PC-9 (cell line): ENCODE measurements at regions of chr12 and their contacts with region 1.

Region 1: DNA sequence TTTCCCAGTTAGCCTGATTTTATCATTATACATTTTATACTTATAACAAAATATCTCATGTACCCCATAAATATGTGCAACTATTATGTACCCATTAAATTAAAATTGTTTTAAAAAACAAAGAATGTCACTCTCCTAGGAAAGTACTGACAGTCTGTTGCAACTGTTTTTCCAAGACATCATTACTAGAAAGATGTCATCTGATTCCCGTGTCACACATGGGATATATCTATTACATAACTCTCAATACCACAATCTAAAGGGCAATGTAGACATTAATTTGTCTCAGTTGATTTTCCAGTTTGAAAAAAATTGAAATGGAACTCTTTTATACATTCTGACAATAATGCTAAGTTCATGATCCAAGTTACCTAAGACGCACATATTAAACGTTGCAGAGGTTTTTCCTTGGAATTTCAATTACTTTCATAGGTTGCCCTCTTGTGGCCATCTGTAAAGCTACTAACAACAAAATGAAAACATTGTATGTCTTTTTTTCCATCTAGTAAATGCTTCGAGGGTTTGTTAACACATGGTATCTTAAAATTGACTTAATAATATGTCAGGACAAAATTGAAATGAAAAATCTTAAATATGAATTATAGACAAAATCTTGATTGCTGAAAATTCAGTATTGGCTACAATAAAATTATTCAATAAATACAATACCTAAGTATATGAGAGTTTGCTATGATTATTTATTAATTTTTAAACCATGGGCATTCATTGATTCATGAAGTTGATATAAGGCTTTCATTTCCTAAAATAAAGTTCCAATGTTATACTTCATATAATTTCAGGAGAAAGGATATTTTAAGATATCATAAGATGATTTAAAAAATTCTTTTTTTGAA is 131.6 kb downstream of the PPFIA2 start:
- DNase-seq: peak in 1 of 2 experiments; percentile 2
- H3K4me3 ChIP-seq: no peak overlapping the region
- H3K27ac ChIP-seq: no peak overlapping the region
- H3K4me1 ChIP-seq: no peaks in the 10 kb centered on the region
- H3K27me3 ChIP-seq: no peaks in the 10 kb centered on the region
- CTCF ChIP-seq: peak; percentile 77

Region 2: DNA sequence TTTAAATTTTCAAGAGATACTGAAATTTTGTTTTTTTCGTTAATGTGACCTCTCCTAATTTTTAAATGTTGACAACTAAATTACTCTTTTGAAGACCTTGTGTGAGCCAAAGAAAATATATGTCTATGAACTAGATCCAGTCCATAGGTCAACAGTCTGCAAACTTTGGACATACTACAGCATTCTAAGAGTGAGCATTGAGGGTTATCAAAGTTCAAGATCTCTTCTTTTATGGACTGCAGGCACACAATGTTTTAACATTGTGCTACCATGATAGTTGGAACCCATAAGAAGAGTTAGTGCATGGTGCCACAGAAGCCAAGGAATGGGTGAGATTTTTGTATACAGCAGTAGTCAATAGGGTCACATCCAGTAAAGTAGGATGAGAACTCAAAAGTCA is 592.6 kb before region 1 on chr12:
- CTCF ChIA-PET with region 1: no interaction called
- POLR2A ChIA-PET with region 1: no interaction called
- intact Hi-C with region 1: no loop called
- DNase-seq: no peak
- H3K4me3 ChIP-seq: no peak overlapping the region
- H3K27ac ChIP-seq: no peak overlapping the region
- H3K4me1 ChIP-seq: no peaks in the 10 kb centered on the region
- H3K27me3 ChIP-seq: no peaks in the 10 kb centered on the region
- CTCF ChIP-seq: no peak

Region 3: GRCh38 chr12:81284137-81284536 is 343.4 kb before region 1 on chr12:
- CTCF ChIA-PET with region 1: no interaction called
- POLR2A ChIA-PET with region 1: no interaction called
- intact Hi-C with region 1: loop called (anchors 10 kb)
- DNase-seq: peak in 1 of 2 experiments; percentile 6
- H3K4me3 ChIP-seq: no peak overlapping the region
- H3K27ac ChIP-seq: no peak overlapping the region
- H3K4me1 ChIP-seq: no peaks in the 10 kb centered on the region
- H3K27me3 ChIP-seq: no peaks in the 10 kb centered on the region
- CTCF ChIP-seq: no peak

Region 4: DNA sequence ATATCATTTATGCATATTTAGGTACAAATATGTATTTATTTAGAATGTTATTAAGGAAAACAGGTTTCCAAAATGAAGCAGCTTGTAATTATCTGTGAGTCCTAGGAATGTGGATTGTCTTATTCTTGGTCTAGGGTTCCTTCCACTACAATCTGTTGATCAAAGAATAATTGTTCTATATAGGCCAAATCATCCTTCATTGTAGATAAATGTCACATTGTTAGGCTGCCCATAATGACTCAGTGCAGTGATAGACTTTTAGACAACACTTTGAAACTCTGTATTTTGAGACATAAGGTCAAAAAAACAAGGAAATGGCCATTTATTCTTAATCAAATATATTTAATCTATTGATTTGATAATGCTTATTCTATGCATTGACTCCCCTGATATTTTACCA is 266.6 kb before region 1 on chr12:
- CTCF ChIA-PET with region 1: no interaction called
- POLR2A ChIA-PET with region 1: no interaction called
- intact Hi-C with region 1: no loop called
- DNase-seq: no peak
- H3K4me3 ChIP-seq: no peak overlapping the region
- H3K27ac ChIP-seq: no peak overlapping the region
- H3K4me1 ChIP-seq: no peaks in the 10 kb centered on the region
- H3K27me3 ChIP-seq: no peaks in the 10 kb centered on the region
- CTCF ChIP-seq: no peak

Region 5: DNA sequence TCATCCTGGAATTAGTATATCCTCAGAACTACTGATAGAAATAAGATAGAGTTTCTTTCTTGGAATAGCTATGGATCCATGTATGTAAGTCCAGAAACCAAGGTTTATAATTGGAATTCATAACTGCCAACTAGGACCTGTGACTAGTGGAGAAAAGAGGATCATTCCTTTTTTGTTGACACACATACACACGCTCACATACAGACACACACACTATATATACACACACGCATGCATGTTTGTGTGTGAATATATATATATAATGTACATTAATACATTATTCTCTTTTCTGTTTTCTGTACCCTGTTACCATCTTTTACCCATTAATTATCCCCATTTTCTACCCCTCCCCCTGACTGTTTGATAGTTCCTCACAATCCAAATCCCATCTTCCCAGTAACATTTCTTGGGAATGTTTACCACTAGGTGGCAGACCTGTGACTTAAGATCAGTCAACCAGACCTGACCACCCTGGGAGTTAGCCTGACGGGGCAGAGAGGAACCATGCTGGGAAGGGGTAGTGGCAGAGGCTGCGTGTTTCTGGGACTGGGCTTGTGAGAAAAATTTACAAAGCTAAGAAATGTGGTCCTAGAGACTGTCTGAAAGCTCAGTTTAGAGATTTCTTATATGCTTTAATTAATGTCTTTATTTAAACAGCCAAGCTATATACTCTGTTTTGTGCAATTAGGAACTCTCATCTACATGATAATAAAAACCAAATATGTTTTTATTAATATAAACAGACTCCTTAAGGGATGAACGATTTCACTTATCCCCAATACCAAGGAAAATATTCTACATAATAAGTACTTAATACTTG is 176.4 kb before region 1 on chr12:
- CTCF ChIA-PET with region 1: no interaction called
- POLR2A ChIA-PET with region 1: no interaction called
- intact Hi-C with region 1: loop called (anchors 1 kb)
- DNase-seq: peak; percentile 11 to 39
- H3K4me3 ChIP-seq: no peak overlapping the region
- H3K27ac ChIP-seq: no peak overlapping the region
- H3K4me1 ChIP-seq: no peaks in the 10 kb centered on the region
- H3K27me3 ChIP-seq: no peaks in the 10 kb centered on the region
- CTCF ChIP-seq: peak; percentile 83

Region 6: DNA sequence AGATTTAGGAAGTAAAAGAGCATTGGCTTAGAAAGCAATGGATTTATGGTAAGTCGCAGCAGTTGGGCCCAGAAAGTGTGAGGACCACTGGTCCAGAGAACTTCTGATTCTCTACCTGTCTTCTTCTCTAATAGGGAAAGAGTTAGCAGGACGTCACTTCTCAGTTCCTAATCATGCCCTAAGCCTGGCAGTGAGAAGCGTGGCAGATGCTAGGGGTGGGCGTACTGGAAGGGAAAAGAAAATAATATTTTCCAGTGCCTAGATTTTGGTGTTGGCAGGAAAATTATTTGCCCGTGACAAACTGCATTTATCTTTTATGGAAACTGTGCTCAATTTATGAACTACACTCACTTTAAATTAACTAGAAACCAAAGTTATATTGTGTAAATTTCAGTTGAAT is 80.8 kb before region 1 on chr12:
- CTCF ChIA-PET with region 1: no interaction called
- POLR2A ChIA-PET with region 1: no interaction called
- intact Hi-C with region 1: no loop called
- DNase-seq: no peak
- H3K4me3 ChIP-seq: no peak overlapping the region
- H3K27ac ChIP-seq: no peak overlapping the region
- H3K4me1 ChIP-seq: no peaks in the 10 kb centered on the region
- H3K27me3 ChIP-seq: no peaks in the 10 kb centered on the region
- CTCF ChIP-seq: no peak

Region 7: DNA sequence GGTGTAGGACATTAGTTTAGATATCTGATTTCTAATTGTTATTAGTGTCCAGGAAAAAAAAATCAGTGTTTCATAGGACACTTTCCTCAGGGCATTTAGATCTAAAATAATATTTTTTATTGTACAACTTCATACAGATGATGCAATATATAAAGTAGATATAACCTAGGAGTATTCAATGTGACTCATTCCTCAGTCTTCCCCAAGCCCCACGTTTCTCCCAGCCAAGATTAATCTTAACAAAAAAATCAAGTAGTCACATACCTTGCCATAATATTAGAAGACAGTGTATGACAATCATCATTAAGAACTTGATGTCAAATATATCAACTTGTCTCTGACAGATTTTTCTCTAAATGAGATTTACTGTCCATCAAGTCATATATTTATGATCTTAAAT is 94.4 kb after region 1 on chr12:
- CTCF ChIA-PET with region 1: no interaction called
- POLR2A ChIA-PET with region 1: no interaction called
- intact Hi-C with region 1: no loop called
- DNase-seq: no peak
- H3K4me3 ChIP-seq: no peak overlapping the region
- H3K27ac ChIP-seq: no peak overlapping the region
- H3K4me1 ChIP-seq: no peaks in the 10 kb centered on the region
- H3K27me3 ChIP-seq: no peaks in the 10 kb centered on the region
- CTCF ChIP-seq: no peak